Caco-2 (cell line): ENCODE measurements at regions of chr3 and their contacts with region 1.

Region 1: DNA sequence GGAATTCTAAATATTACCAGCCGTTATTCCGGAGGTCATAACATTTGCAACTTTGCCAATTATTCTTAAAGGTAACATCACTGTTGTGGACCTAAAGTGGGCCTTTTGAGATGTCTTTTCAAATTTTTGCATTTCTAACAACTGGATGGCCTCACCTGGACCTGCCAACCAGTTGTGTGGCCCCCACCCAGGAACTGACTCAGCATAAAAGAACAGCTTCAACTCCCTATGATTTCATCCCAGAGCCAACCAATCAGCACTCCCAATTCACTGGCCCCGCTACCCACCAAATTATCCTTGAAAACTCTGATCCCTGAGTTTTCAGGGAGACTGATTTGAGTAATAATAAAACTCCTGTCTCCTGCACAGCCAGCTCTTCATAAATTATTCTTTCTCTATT is 489.7 kb upstream of the LMCD1 start:
- DNase-seq: no peak
- H3K4me3 ChIP-seq: no peak overlapping the region
- H3K4me3 Mint-ChIP-seq: no peak overlapping the region
- H3K27ac Mint-ChIP-seq: peak overlapping the region; percentile 53
- H3K4me1 ChIP-seq: peaks cover 25% of the 10 kb centered on the region
- H3K4me1 Mint-ChIP-seq: no peaks in the 10 kb centered on the region
- H3K27me3 ChIP-seq: no peaks in the 10 kb centered on the region
- H3K27me3 Mint-ChIP-seq: no peaks in the 10 kb centered on the region
- CTCF ChIP-seq: no peak

Region 2: DNA sequence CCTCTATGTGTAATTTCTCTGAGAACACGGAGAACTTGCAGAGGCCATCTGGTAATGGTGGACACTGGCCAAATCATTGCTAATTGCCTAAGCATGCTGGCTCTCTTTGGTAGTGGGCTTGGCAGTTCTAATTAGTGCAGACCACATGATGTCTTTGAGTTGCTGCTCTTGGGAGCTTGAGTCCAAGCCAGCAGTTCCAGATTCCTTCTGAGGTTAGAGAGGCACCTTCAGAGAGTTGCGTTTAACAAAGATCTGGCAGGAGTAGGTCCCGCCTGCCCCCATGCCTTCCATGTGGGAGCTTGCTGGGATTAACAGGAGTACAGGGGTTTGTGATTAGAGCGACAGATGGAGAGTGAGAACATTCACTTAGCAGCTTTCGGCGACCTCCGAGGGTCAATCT is 40.8 kb after region 1 on chr3:
- CTCF ChIA-PET with region 1: no interaction called
- POLR2A ChIA-PET with region 1: no interaction called
- intact Hi-C with region 1: loop called (anchors 5 kb)
- DNase-seq: no peak
- H3K4me3 ChIP-seq: no peak overlapping the region
- H3K4me3 Mint-ChIP-seq: no peak overlapping the region
- H3K27ac Mint-ChIP-seq: no peak overlapping the region
- H3K4me1 ChIP-seq: peaks cover 14% of the 10 kb centered on the region
- H3K4me1 Mint-ChIP-seq: peaks cover 11% of the 10 kb centered on the region
- H3K27me3 ChIP-seq: no peaks in the 10 kb centered on the region
- H3K27me3 Mint-ChIP-seq: peaks cover 17% of the 10 kb centered on the region
- CTCF ChIP-seq: no peak